ENCODE measurements at regions of chr13 and their contacts with region 1.

Region 1: GRCh38 chr13:21176220-21176982 is at the starts of genes MRPL57 and SKA3:
- DNase-seq: peak; percentile 64 to 93
- H3K4me3 ChIP-seq: peak within 1 kb of the TSS; percentile 82 to 89
- H3K27ac ChIP-seq: peak within 1 kb of the TSS; percentile 94 to 95
- H3K4me1 ChIP-seq: peaks cover 0 to 6% of the 10 kb centered on the region in 2 donors
- H3K27me3 ChIP-seq: no peaks in the 10 kb centered on the region
- CTCF ChIP-seq: peak; percentile 9 to 45 (median 19)
- total RNA-seq, gene MRPL57: 36.7 TPM
- total RNA-seq, gene SKA3: not detected

Region 2: GRCh38 chr13:21476893-21477472 is 300.6 kb after region 1 on chr13:
- intact Hi-C with region 1: loop called (anchors 5 kb)
- DNase-seq: peak in 1 of 2 donors; percentile 87
- H3K4me3 ChIP-seq: peak overlapping the region; percentile 24 to 53
- H3K27ac ChIP-seq: no peak overlapping the region
- H3K4me1 ChIP-seq: peaks cover 0 to 4% of the 10 kb centered on the region in 2 donors
- H3K27me3 ChIP-seq: no peaks in the 10 kb centered on the region
- CTCF ChIP-seq: peak; percentile 80 to 93 (median 90)